PC-9 (cell line): ENCODE measurements at regions of chr2 and their contacts with region 1.

Region 1: GRCh38 chr2:181374781-181375675 is 82.2 kb upstream of the ITGA4 start:
- DNase-seq: no peak
- H3K4me3 ChIP-seq: no peak overlapping the region
- H3K27ac ChIP-seq: no peak overlapping the region
- H3K4me1 ChIP-seq: peaks cover 10% of the 10 kb centered on the region
- H3K27me3 ChIP-seq: no peaks in the 10 kb centered on the region
- CTCF ChIP-seq: no peak

Region 2: GRCh38 chr2:181419129-181419855 is 44.3 kb after region 1 on chr2:
- CTCF ChIA-PET with region 1: no interaction called
- POLR2A ChIA-PET with region 1: no interaction called
- intact Hi-C with region 1: no loop called
- DNase-seq: no peak
- H3K4me3 ChIP-seq: no peak overlapping the region
- H3K27ac ChIP-seq: no peak overlapping the region
- H3K4me1 ChIP-seq: no peaks in the 10 kb centered on the region
- H3K27me3 ChIP-seq: no peaks in the 10 kb centered on the region
- CTCF ChIP-seq: no peak

Region 3: GRCh38 chr2:182740701-182741100 is 1365.7 kb after region 1 on chr2:
- CTCF ChIA-PET with region 1: no interaction called
- POLR2A ChIA-PET with region 1: interaction called, 13 read pairs
- intact Hi-C with region 1: no loop called
- DNase-seq: no peak
- H3K4me3 ChIP-seq: no peak overlapping the region
- H3K27ac ChIP-seq: no peak overlapping the region
- H3K4me1 ChIP-seq: no peaks in the 10 kb centered on the region
- H3K27me3 ChIP-seq: no peaks in the 10 kb centered on the region
- CTCF ChIP-seq: no peak